ENCODE measurements at regions of chr6 and their contacts with region 1.

Region 1: DNA sequence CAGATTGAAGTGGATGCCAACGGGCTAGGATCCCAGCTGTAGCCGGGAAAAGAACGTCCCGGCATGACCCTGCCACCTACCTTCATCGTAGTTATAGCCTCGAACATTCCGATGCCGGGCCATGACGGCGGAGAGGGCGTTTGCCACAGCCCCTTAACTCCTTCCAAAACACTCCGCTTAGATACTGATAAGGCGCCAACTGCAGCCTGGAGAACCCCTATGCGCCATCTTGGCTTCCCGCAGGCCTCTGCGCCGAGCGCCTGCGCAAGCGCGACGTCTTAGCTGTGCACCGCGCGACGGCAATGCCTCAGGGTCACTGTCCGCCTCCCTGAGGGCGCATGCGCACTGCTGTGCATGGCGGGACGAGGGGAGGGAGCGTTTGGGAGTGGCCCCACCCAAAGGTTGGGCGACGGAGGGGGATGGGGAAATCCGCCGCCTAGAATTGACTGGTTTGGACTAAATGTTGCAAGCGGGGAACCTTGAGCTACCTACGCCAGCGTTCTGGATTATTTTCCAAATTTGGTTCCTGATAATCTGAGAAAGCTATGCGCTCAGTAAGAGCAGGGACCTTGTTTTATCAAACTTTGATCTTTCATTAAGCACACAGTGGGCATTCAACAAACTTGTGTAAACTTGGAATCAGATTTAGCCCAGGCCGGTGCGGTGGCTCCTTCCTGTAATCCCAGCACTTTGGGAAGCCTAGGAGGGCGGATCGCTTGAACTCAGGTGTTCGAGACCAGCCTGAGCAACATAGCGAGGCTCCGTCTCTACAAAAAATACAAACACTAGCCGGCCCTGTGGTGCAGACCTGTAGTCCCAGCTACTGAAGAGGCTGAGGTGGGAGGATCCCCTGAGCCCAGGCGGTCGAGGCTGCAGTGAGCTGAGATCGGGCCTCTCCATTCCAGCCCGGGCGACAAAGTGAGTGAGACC is at the start of gene HBS1L:
- DNase-seq: peak; percentile 97 to 100 (median 98)
- ATAC-seq: peak; percentile 93
- H3K4me3 ChIP-seq: peak within 1 kb of the TSS; percentile 70
- H3K27ac ChIP-seq: peak within 1 kb of the TSS; percentile 94
- H3K4me1 ChIP-seq: peaks cover 3 to 11% of the 10 kb centered on the region in 2 experiments; a peak in 4 of 5 replicates
- H3K27me3 ChIP-seq: no peaks in the 10 kb centered on the region
- CTCF ChIP-seq: no peak
- EP300 ChIP-seq: no peak
- POLR2A ChIP-seq: peak; percentile 92
- RAD21 ChIP-seq: no peak
- polyA plus RNA-seq, gene HBS1L: 101 to 199 TPM

Region 2: DNA sequence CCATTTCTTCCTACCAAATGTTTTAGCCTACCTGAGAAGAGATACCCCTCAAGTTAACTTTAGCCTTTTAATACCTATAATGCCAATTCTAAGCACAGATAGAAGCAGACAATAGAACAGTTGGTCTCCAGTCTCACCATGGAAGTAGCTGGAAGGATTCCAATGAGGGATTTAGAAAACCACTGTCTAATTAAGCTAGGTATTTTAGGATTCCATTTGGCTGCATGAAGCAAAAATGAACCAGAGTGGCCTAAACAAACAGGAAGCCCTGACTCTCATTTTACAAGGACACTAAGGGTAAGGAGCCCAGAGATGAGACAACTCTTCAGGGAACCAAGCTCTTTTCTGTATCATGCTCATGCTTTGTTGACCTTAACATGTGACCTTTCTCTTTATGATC is 304.2 kb before region 1 on chr6:
- CTCF ChIA-PET with region 1: no interaction called
- POLR2A ChIA-PET with region 1: no interaction called
- in situ Hi-C with region 1: no loop called
- intact Hi-C with region 1: no loop called
- DNase-seq: no peak
- ATAC-seq: no peak
- H3K4me3 ChIP-seq: no peak overlapping the region
- H3K27ac ChIP-seq: no peak overlapping the region
- H3K4me1 ChIP-seq: no peaks in the 10 kb centered on the region; a peak in 1 of 5 replicates
- H3K27me3 ChIP-seq: peaks cover 3 to 15% of the 10 kb centered on the region in 2 experiments; a peak in 2 of 5 replicates
- CTCF ChIP-seq: no peak
- EP300 ChIP-seq: no peak
- POLR2A ChIP-seq: no peak
- RAD21 ChIP-seq: no peak

Region 3: GRCh38 chr6:135037541-135037940 is 17.3 kb before region 1 on chr6:
- CTCF ChIA-PET with region 1: no interaction called
- POLR2A ChIA-PET with region 1: interaction called, 36 read pairs
- in situ Hi-C with region 1: no loop called
- intact Hi-C with region 1: no loop called
- DNase-seq: no peak
- ATAC-seq: no peak
- H3K4me3 ChIP-seq: no peak overlapping the region
- H3K27ac ChIP-seq: no peak overlapping the region
- H3K4me1 ChIP-seq: no peaks in the 10 kb centered on the region
- H3K27me3 ChIP-seq: no peaks in the 10 kb centered on the region
- CTCF ChIP-seq: no peak
- EP300 ChIP-seq: no peak
- POLR2A ChIP-seq: no peak
- RAD21 ChIP-seq: no peak

Region 4: GRCh38 chr6:135044639-135045038 is 10.2 kb before region 1 on chr6:
- CTCF ChIA-PET with region 1: no interaction called
- POLR2A ChIA-PET with region 1: interaction called, 36 read pairs
- in situ Hi-C with region 1: no loop called
- intact Hi-C with region 1: no loop called
- DNase-seq: no peak
- ATAC-seq: no peak
- H3K4me3 ChIP-seq: no peak overlapping the region
- H3K27ac ChIP-seq: no peak overlapping the region
- H3K4me1 ChIP-seq: peaks cover 0 to 7% of the 10 kb centered on the region in 2 experiments; a peak in 3 of 5 replicates
- H3K27me3 ChIP-seq: no peaks in the 10 kb centered on the region
- CTCF ChIP-seq: no peak
- EP300 ChIP-seq: no peak
- POLR2A ChIP-seq: no peak
- RAD21 ChIP-seq: no peak

Region 5: DNA sequence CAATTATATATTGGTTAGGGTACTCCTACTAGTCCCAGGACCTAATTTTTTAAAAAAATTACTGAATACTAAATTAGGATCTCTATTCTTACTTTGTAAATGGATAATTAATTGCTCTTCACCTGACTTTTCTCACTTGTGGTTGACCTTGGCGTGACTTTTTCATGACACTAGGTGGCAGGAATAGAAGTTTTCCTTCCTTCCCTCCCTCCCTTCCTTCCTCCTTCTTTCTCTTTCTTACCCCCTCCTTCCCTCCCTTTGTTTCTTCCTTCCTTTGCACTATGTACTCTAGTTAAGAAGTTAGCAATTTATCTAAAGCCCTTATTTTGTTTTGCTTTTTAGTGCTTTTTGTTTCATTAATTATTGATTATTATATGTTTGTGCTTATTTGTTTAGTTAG is 20.2 kb after region 1 on chr6:
- CTCF ChIA-PET with region 1: no interaction called
- POLR2A ChIA-PET with region 1: interaction called, 11 read pairs
- in situ Hi-C with region 1: no loop called
- intact Hi-C with region 1: no loop called
- DNase-seq: peak; percentile 31 to 71 (median 38)
- ATAC-seq: peak; percentile 71
- H3K4me3 ChIP-seq: no peak overlapping the region
- H3K27ac ChIP-seq: peak overlapping the region; percentile 70
- H3K4me1 ChIP-seq: peaks cover 5 to 19% of the 10 kb centered on the region in 2 experiments; a peak in 4 of 5 replicates
- H3K27me3 ChIP-seq: no peaks in the 10 kb centered on the region
- CTCF ChIP-seq: peak; percentile 29 to 45 (median 43); a peak in 3 of 6 replicates
- EP300 ChIP-seq: no peak
- POLR2A ChIP-seq: no peak
- RAD21 ChIP-seq: peak; percentile 25 to 54

Region 6: GRCh38 chr6:135088818-135089809 is 34.3 kb after region 1 on chr6:
- CTCF ChIA-PET with region 1: no interaction called
- POLR2A ChIA-PET with region 1: interaction called, 7 read pairs
- in situ Hi-C with region 1: no loop called
- intact Hi-C with region 1: loop called (anchors 2 kb)
- DNase-seq: peak; percentile 52 to 60 (median 58)
- ATAC-seq: peak; percentile 63
- H3K4me3 ChIP-seq: no peak overlapping the region
- H3K27ac ChIP-seq: peak overlapping the region; percentile 19; the same call in 1 of the 3 replicates
- H3K4me1 ChIP-seq: peaks cover 29 to 86% of the 10 kb centered on the region in 2 experiments
- H3K27me3 ChIP-seq: no peaks in the 10 kb centered on the region
- CTCF ChIP-seq: peak in 2 of 3 experiments; percentile 55 to 60; a peak in 5 of 6 replicates
- EP300 ChIP-seq: 0 out of 2 replicates have a peak, but pooled peaks have one; percentile 13
- POLR2A ChIP-seq: no peak
- RAD21 ChIP-seq: no peak; a peak in 1 of 4 replicates

Region 7: GRCh38 chr6:135183532-135184440 is 129.0 kb after region 1 on chr6:
- CTCF ChIA-PET with region 1: no interaction called
- POLR2A ChIA-PET with region 1: interaction called, 8 read pairs
- in situ Hi-C with region 1: no loop called
- intact Hi-C with region 1: loop called (anchors 2 kb)
- DNase-seq: peak; percentile 66 to 96 (median 76)
- ATAC-seq: peak; percentile 81
- H3K4me3 ChIP-seq: peak overlapping the region; percentile 71
- H3K27ac ChIP-seq: peak overlapping the region; percentile 73
- H3K4me1 ChIP-seq: peaks cover 23 to 26% of the 10 kb centered on the region in 2 experiments
- H3K27me3 ChIP-seq: no peaks in the 10 kb centered on the region
- CTCF ChIP-seq: peak; percentile 87 to 92 (median 92)
- EP300 ChIP-seq: peak; percentile 10
- POLR2A ChIP-seq: no peak
- RAD21 ChIP-seq: peak; percentile 85 to 87

Region 8: GRCh38 chr6:135630789-135631376 is 576.0 kb after region 1 on chr6:
- CTCF ChIA-PET with region 1: no interaction called
- POLR2A ChIA-PET with region 1: no interaction called
- in situ Hi-C with region 1: no loop called
- intact Hi-C with region 1: no loop called
- DNase-seq: no peak
- ATAC-seq: no peak
- H3K4me3 ChIP-seq: no peak overlapping the region
- H3K27ac ChIP-seq: no peak overlapping the region
- H3K4me1 ChIP-seq: no peaks in the 10 kb centered on the region
- H3K27me3 ChIP-seq: no peaks in the 10 kb centered on the region
- CTCF ChIP-seq: no peak
- EP300 ChIP-seq: no peak
- POLR2A ChIP-seq: no peak
- RAD21 ChIP-seq: no peak

Measured in K562 (cell line).